Activated CD4-positive, alpha-beta T cell treated with anti-CD3 and anti-CD28 coated beads for 36 hours (primary cell): ENCODE measurements at regions of chr16 and their contacts with region 1.

Region 1: DNA sequence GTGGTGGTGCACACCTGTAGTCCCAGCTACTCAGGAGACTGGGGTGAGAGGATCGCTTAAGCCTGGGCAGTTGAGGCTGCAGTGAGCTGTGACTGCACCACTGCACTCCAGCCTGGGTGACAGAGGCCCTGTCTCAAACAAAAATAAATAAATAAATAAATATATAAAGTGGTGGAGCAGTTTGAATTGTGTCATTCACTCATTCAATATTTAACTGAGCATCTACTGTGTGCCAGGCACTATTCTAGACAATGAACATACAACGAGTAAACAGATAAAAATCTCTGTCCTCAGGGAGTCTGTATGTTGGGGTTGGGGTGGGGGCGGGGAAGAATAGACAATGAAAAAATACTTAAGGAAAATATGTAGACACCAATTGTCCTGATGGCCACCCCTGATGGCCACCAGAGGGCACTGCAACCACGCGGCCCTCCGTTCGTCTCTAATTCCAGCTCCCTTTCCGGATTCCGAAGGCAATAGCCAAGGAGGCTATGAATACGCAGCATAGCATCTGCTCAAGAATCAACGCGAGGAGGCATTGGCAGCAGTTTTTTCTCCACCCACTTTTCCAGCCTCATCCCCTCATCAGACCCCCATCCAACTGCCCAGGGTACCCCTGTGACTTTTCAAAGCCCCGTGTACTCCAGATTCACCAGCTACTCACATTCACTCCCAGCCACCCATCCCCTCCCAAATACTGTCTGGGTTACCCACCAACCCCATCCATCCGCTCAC is 21.4 kb downstream of the QPRT start:
- DNase-seq: peak; percentile 88
- ATAC-seq: peak; percentile 45
- H3K4me3 Mint-ChIP-seq: peak overlapping the region; percentile 44
- H3K27ac Mint-ChIP-seq: peak overlapping the region; percentile 67
- H3K4me1 Mint-ChIP-seq: peaks cover 32% of the 10 kb centered on the region
- H3K27me3 Mint-ChIP-seq: no peaks in the 10 kb centered on the region

Region 2: GRCh38 chr16:29710227-29711219 is 10.1 kb after region 1 on chr16:
- CTCF ChIA-PET with region 1: interaction called, 34 read pairs
- POLR2A ChIA-PET with region 1: no interaction called
- intact Hi-C with region 1: loop called in 1 of 2 experiments (anchors 1 kb)
- DNase-seq: peak; percentile 50
- ATAC-seq: peak; percentile 95
- H3K4me3 Mint-ChIP-seq: no peak overlapping the region
- H3K27ac Mint-ChIP-seq: no peak overlapping the region
- H3K4me1 Mint-ChIP-seq: peaks cover 14% of the 10 kb centered on the region
- H3K27me3 Mint-ChIP-seq: no peaks in the 10 kb centered on the region

Region 3: DNA sequence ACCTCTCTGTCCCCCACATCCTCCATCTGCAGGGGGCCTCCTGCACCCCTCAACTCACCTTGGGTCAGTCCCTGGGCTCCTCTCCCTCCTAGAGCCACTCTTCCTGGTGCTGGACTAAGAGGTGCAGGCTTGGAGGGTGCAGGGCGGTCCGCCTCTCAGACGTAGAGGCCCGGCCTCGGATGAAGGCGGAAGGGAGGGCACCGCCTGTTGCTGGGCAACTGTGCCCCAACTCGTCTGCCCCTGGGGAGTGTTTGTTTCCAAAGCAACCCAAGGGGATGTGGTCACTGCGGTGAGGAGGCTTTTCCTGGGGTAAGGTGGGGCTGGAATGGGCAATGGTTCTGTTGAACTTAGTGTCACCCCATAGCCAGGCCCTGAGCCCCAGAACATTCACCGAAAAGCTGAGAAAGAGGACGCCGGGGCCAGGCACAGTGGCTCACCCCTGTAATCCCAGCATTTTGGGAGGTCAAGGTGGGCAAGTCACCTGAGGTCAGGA is 45.5 kb after region 1 on chr16 and contains the start of gene C16orf54:
- CTCF ChIA-PET with region 1: interaction called, 3 read pairs
- POLR2A ChIA-PET with region 1: interaction called, 4 read pairs
- intact Hi-C with region 1: loop called (anchors 1 to 2 kb)
- DNase-seq: peak; percentile 93
- ATAC-seq: peak; percentile 78
- H3K4me3 Mint-ChIP-seq: peak within 1 kb of the TSS; percentile 97
- H3K27ac Mint-ChIP-seq: peak within 1 kb of the TSS; percentile 97
- H3K4me1 Mint-ChIP-seq: peaks cover 59% of the 10 kb centered on the region
- H3K27me3 Mint-ChIP-seq: no peaks in the 10 kb centered on the region
- total RNA-seq, gene C16orf54: 21.3 to 22.0 TPM

Region 4: GRCh38 chr16:29805378-29806098 is 105.1 kb after region 1 on chr16:
- CTCF ChIA-PET with region 1: interaction called, 13 read pairs
- POLR2A ChIA-PET with region 1: interaction called, 8 read pairs
- intact Hi-C with region 1: loop called (anchors 1 to 2 kb)
- DNase-seq: peak; percentile 99
- ATAC-seq: peak; percentile 64
- H3K4me3 Mint-ChIP-seq: peak overlapping the region; percentile 99
- H3K27ac Mint-ChIP-seq: peak overlapping the region; percentile 100
- H3K4me1 Mint-ChIP-seq: peaks cover 37% of the 10 kb centered on the region
- H3K27me3 Mint-ChIP-seq: no peaks in the 10 kb centered on the region

Region 5: DNA sequence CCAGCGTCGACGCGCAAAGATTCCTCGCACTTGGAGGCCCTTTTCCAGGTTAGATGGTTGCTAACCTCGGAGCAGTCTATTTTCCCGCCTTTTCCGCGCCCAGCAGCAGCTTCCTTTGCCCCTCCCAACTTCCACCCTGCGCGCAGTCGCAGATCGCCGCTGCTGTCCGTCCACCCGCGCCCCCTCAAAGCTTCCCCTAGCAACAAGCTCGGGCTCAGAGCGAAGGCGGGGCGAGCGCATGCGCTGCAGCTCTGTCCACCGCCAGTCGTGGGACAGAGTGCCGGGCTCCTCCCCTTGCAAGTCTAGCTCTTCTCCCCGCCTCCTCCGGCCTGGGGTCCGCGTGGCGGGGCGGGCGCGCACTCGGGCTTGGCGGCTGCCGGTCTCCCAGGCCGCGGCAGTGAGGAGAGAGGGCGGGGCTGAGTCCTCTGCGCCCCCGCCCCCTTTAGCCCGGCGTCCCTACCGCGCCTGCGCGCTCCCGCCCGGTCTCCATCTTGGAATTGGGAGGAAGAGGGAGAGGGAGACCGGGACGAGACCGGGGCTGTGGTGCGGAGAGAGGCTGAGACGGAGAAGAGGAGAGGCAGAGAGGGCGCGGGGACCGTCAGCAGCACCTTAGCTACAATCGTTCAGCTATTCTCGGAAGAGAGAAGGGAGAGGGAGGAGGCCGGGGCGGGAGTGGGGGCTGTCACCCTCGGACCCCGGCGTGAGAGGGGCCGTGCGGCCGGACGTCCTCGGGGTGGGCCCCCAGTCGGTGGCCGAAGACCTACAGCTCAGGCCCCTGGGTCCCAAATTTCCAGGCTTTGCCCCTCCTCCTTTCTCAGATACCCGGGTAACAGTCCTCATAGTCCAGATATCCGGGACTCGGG is 273.2 kb after region 1 on chr16 and contains the start of gene TAOK2:
- CTCF ChIA-PET with region 1: interaction called, 8 read pairs
- POLR2A ChIA-PET with region 1: no interaction called
- intact Hi-C with region 1: loop called in 1 of 2 experiments (anchors 5 kb)
- DNase-seq: peak; percentile 98
- ATAC-seq: peak; percentile 98
- H3K4me3 Mint-ChIP-seq: peak within 1 kb of the TSS; percentile 87
- H3K27ac Mint-ChIP-seq: peak within 1 kb of the TSS; percentile 86
- H3K4me1 Mint-ChIP-seq: peaks cover 31% of the 10 kb centered on the region
- H3K27me3 Mint-ChIP-seq: no peaks in the 10 kb centered on the region
- total RNA-seq, gene TAOK2: 24.1 to 24.4 TPM

Region 6: GRCh38 chr16:30032083-30032819 is 331.8 kb after region 1 on chr16:
- CTCF ChIA-PET with region 1: interaction called, 20 read pairs
- POLR2A ChIA-PET with region 1: no interaction called
- intact Hi-C with region 1: loop called in 1 of 2 experiments (anchors 1 kb)
- DNase-seq: peak; percentile 80
- ATAC-seq: peak; percentile 62
- H3K4me3 Mint-ChIP-seq: peak overlapping the region; percentile 8
- H3K27ac Mint-ChIP-seq: no peak overlapping the region
- H3K4me1 Mint-ChIP-seq: peaks cover 8% of the 10 kb centered on the region
- H3K27me3 Mint-ChIP-seq: peaks cover 38% of the 10 kb centered on the region

Region 7: DNA sequence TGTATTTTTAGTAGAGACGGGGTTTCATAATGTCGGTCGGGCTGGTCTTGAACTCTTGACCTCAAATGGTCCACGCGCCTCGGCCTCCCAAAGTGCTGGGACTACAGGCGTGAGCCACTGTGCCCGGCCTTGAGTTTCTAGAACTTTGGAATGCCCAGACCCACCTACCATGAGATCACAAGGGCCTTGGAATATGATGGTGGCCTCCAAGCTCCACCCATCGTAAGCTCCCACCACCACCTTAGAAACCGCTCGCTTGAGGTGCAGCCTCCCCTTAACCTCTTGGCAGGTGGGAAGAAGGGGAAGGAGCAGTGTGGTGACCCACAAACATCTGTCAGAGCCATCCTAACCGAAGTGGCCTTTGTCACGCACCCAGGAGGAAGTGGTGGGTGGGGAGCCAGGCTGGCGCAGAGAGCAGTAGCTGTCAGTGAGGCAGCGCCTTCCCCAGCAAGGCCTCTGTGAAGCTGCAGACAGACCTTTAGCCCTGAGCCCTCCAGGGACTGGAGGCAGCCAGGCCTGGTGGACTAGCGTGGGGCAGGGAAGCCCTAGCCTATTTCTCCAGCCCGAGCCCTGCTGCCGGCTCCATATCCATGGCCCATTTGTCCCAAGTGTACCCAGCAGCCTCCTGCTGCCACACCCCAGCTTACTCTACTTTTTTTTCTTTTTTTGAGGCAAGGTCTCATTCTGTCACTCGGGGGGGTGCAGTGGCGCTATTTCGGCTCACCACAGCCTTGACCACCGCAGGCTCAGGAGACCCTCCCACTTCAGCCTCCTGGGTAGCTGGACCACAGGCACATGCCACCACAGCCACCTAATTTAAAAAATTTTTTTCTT is 758.4 kb after region 1 on chr16:
- CTCF ChIA-PET with region 1: no interaction called
- POLR2A ChIA-PET with region 1: no interaction called
- intact Hi-C with region 1: no loop called
- DNase-seq: peak; percentile 94
- ATAC-seq: peak; percentile 96
- H3K4me3 Mint-ChIP-seq: peak overlapping the region; percentile 57
- H3K27ac Mint-ChIP-seq: peak overlapping the region; percentile 95
- H3K4me1 Mint-ChIP-seq: peaks cover 59% of the 10 kb centered on the region
- H3K27me3 Mint-ChIP-seq: no peaks in the 10 kb centered on the region